ENCODE measurements at regions of chr6 and their contacts with region 1.

Region 1: DNA sequence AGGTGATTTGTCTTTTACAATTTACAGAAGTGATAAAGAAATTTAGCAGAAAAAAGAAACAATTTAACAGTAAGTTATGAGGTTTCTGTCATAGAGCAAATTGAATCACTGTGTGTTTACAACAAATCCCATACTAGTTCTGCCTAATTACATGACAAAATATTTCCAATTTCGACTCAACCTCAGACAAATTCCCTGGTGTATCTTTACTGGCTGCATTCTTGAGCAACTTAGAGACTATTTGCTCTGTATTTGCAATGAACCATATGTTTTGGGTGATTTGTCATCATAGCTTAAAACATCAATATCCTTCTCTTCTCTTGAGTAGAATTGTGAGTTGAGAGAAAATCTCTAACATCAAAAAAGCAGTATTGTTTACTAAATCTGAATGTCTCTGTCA is 128.7 kb downstream of the SIM1 start:
- DNase-seq: no peak
- ATAC-seq: no peak
- H3K4me3 ChIP-seq: no peak overlapping the region
- H3K27ac ChIP-seq: no peak overlapping the region
- H3K4me1 ChIP-seq: no peaks in the 10 kb centered on the region
- H3K27me3 ChIP-seq: no peaks in the 10 kb centered on the region
- CTCF ChIP-seq: no peak

Region 2: DNA sequence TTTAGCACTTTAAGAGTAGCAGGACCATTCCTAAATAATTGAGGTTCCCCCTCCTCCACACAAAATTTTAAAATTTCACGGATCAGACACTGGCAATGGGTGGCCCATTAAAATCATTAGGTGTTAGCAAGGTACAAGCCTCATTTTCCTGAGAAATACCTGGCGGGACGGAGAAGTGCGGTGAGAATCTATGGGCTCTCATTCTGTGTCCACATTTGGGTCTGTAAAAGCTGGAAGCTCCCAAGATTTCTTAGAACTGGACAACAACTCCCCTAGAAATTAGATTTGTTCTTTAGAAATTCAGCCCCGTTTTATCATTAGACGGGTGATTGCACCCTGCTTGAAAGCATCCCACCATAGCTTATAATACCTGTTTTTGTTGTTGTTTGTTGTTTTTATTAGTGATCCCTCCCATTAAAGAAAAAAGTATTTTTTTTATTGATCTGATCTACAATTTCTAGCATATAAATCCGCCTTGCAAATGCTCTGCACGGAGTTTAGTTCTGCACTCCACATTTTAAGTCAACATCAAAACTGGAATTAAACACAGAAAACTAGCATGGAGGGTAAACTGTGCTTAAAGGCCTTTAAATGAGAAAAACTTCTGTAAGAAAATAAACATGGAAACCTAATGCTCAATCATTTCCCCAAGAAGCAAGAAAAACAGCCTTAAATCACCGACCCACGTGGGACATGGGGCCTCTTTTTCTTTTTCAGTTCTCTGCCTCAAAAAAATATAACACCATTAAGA is 123.0 kb after region 1 on chr6:
- intact Hi-C with region 1: loop called (anchors 2 to 5 kb)
- DNase-seq: no peak
- ATAC-seq: no peak
- H3K4me3 ChIP-seq: peak overlapping the region; percentile 84
- H3K27ac ChIP-seq: peak overlapping the region; percentile 96
- H3K4me1 ChIP-seq: no peaks in the 10 kb centered on the region
- H3K27me3 ChIP-seq: peaks cover 0 to 43% (median 6%) of the 10 kb centered on the region in 3 donors
- CTCF ChIP-seq: no peak

Region 3: GRCh38 chr6:100464903-100465700 is 129.1 kb after region 1 on chr6 and contains the start of gene SIM1:
- intact Hi-C with region 1: loop called in 1 of 2 experiments (anchors 5 kb)
- DNase-seq: peak; percentile 62 to 95
- ATAC-seq: peak; percentile 90 to 98 (median 96)
- H3K4me3 ChIP-seq: peak within 1 kb of the TSS; percentile 84
- H3K27ac ChIP-seq: peak within 1 kb of the TSS; percentile 96
- H3K4me1 ChIP-seq: peaks cover 10% of the 10 kb centered on the region
- H3K27me3 ChIP-seq: peaks cover 0 to 44% (median 4%) of the 10 kb centered on the region in 3 donors
- CTCF ChIP-seq: no peak
- total RNA-seq, gene SIM1: 0.60 to 14.4 (median 5.4) TPM